CD4-positive, alpha-beta memory T cell (primary cell): ENCODE measurements at regions of chr13 and their contacts with region 1.

Region 1: GRCh38 chr13:52450012-52450792 is at the start of gene VPS36:
- DNase-seq: peak; percentile 89 to 94 (median 94)
- H3K4me3 ChIP-seq: peak within 1 kb of the TSS; percentile 53 to 95
- H3K4me3 Mint-ChIP-seq: peak within 1 kb of the TSS; percentile 90 to 98 (median 94)
- H3K27ac ChIP-seq: peak within 1 kb of the TSS; percentile 82
- H3K27ac Mint-ChIP-seq: peak within 1 kb of the TSS; percentile 84 to 95 (median 92)
- H3K4me1 ChIP-seq: peaks cover 38% of the 10 kb centered on the region
- H3K4me1 Mint-ChIP-seq: peaks cover 22 to 55% (median 36%) of the 10 kb centered on the region in 4 donors
- H3K27me3 ChIP-seq: no peaks in the 10 kb centered on the region
- H3K27me3 Mint-ChIP-seq: no peaks in the 10 kb centered on the region
- total RNA-seq, gene VPS36: 59.9 to 64.5 TPM

Region 2: GRCh38 chr13:51825165-51825592 is 625.0 kb before region 1 on chr13:
- CTCF ChIA-PET with region 1: interaction called, 4 read pairs
- POLR2A ChIA-PET with region 1: no interaction called
- intact Hi-C with region 1: loop called (anchors 5 kb)
- DNase-seq: peak; percentile 57 to 84 (median 79)
- H3K4me3 ChIP-seq: peak overlapping the region; percentile 31 to 56
- H3K4me3 Mint-ChIP-seq: peak overlapping the region; percentile 86 to 95 (median 90)
- H3K27ac ChIP-seq: peak overlapping the region; percentile 65
- H3K27ac Mint-ChIP-seq: peak overlapping the region; percentile 88 to 95 (median 94)
- H3K4me1 ChIP-seq: peaks cover 81% of the 10 kb centered on the region
- H3K4me1 Mint-ChIP-seq: peaks cover 56 to 99% (median 77%) of the 10 kb centered on the region in 4 donors
- H3K27me3 ChIP-seq: no peaks in the 10 kb centered on the region
- H3K27me3 Mint-ChIP-seq: no peaks in the 10 kb centered on the region

Region 3: GRCh38 chr13:52128714-52129700 is 321.2 kb before region 1 on chr13 and contains the start of gene NEK5:
- CTCF ChIA-PET with region 1: interaction called, 5 read pairs
- POLR2A ChIA-PET with region 1: no interaction called
- intact Hi-C with region 1: loop called (anchors 5 kb)
- DNase-seq: peak; percentile 48 to 58 (median 55)
- H3K4me3 ChIP-seq: peak within 1 kb of the TSS; percentile 59 to 73
- H3K4me3 Mint-ChIP-seq: peak within 1 kb of the TSS; percentile 77 to 95 (median 86)
- H3K27ac ChIP-seq: no peak within 1 kb of the TSS
- H3K27ac Mint-ChIP-seq: peak within 1 kb of the TSS in 6 of 7 donors; percentile 3 to 50 (median 18)
- H3K4me1 ChIP-seq: peaks cover 19% of the 10 kb centered on the region
- H3K4me1 Mint-ChIP-seq: peaks cover 11 to 19% (median 13%) of the 10 kb centered on the region in 4 donors
- H3K27me3 ChIP-seq: peaks cover 4% of the 10 kb centered on the region
- H3K27me3 Mint-ChIP-seq: peaks cover 0 to 3% of the 10 kb centered on the region in 2 donors
- total RNA-seq, gene NEK5: not detected

Region 4: DNA sequence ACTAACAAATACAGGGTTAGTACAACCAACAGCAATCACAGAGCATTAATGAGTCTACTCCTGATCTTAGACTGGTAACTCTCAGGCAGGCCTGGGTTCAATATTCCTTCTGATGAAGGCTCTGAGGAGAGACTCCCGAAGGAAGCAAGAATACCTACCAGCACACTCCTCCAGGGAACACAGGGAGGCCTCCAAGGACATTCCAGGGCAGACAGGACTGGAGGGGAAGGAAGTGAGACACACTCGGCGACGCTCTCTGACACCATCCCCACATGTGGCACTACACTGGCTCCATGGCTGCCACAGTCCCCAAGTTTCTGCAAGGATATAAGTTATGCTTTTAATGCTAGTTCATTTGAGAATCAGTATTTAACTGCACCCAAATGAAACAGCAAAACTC is 64.3 kb before region 1 on chr13:
- CTCF ChIA-PET with region 1: no interaction called
- POLR2A ChIA-PET with region 1: no interaction called
- intact Hi-C with region 1: no loop called
- DNase-seq: no peak
- H3K4me3 ChIP-seq: no peak overlapping the region
- H3K4me3 Mint-ChIP-seq: no peak overlapping the region
- H3K27ac ChIP-seq: no peak overlapping the region
- H3K27ac Mint-ChIP-seq: no peak overlapping the region
- H3K4me1 ChIP-seq: no peaks in the 10 kb centered on the region
- H3K4me1 Mint-ChIP-seq: no peaks in the 10 kb centered on the region
- H3K27me3 ChIP-seq: no peaks in the 10 kb centered on the region
- H3K27me3 Mint-ChIP-seq: no peaks in the 10 kb centered on the region

Region 5: GRCh38 chr13:52399708-52400107 is 50.5 kb before region 1 on chr13:
- CTCF ChIA-PET with region 1: interaction called, 3 read pairs
- POLR2A ChIA-PET with region 1: no interaction called
- intact Hi-C with region 1: loop called (anchors 1 kb)
- DNase-seq: no peak
- H3K4me3 ChIP-seq: no peak overlapping the region
- H3K4me3 Mint-ChIP-seq: no peak overlapping the region
- H3K27ac ChIP-seq: no peak overlapping the region
- H3K27ac Mint-ChIP-seq: no peak overlapping the region
- H3K4me1 ChIP-seq: peaks cover 9% of the 10 kb centered on the region
- H3K4me1 Mint-ChIP-seq: peaks cover 5 to 8% (median 8%) of the 10 kb centered on the region in 4 donors
- H3K27me3 ChIP-seq: no peaks in the 10 kb centered on the region
- H3K27me3 Mint-ChIP-seq: peaks cover 25% of the 10 kb centered on the region in 2 donors

Region 6: GRCh38 chr13:52652196-52652979 is 202.2 kb after region 1 on chr13 and contains the start of gene SUGT1:
- CTCF ChIA-PET with region 1: interaction called, 14 read pairs
- POLR2A ChIA-PET with region 1: interaction called, 25 read pairs
- intact Hi-C with region 1: loop called (anchors 1 kb)
- DNase-seq: peak; percentile 96 to 98 (median 97)
- H3K4me3 ChIP-seq: peak within 1 kb of the TSS; percentile 61 to 94
- H3K4me3 Mint-ChIP-seq: no peak within 1 kb of the TSS
- H3K27ac ChIP-seq: peak within 1 kb of the TSS; percentile 96
- H3K27ac Mint-ChIP-seq: no peak within 1 kb of the TSS
- H3K4me1 ChIP-seq: peaks cover 46% of the 10 kb centered on the region
- H3K4me1 Mint-ChIP-seq: peaks cover 8 to 16% (median 13%) of the 10 kb centered on the region in 4 donors
- H3K27me3 ChIP-seq: no peaks in the 10 kb centered on the region
- H3K27me3 Mint-ChIP-seq: no peaks in the 10 kb centered on the region
- total RNA-seq, gene SUGT1: 40.4 to 42.5 TPM

Region 7: DNA sequence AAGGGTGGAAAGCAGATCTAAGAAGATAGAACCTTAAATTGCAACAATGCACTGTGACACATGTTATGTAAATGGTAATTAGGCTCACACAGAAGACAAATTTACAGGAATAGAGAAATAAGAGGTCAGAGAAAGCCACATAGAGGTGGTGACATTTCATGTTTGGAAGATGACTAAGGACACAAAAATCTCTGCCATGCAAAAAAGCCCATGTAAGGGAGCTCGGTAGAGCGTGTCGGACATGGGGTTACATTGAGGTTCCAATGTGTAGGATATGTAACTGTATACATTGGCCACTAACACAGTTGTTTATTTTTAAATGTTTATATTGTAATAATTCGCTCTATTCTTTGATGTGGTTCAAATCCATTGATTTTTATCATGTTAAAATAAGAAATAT is 236.2 kb after region 1 on chr13:
- CTCF ChIA-PET with region 1: no interaction called
- POLR2A ChIA-PET with region 1: no interaction called
- intact Hi-C with region 1: no loop called
- DNase-seq: no peak
- H3K4me3 ChIP-seq: no peak overlapping the region
- H3K4me3 Mint-ChIP-seq: no peak overlapping the region
- H3K27ac ChIP-seq: no peak overlapping the region
- H3K27ac Mint-ChIP-seq: no peak overlapping the region
- H3K4me1 ChIP-seq: no peaks in the 10 kb centered on the region
- H3K4me1 Mint-ChIP-seq: peaks cover 6 to 12% (median 9%) of the 10 kb centered on the region in 4 donors
- H3K27me3 ChIP-seq: no peaks in the 10 kb centered on the region
- H3K27me3 Mint-ChIP-seq: no peaks in the 10 kb centered on the region